Panc1 (cell line): ENCODE measurements at regions of chr17 and their contacts with region 1.

Region 1: DNA sequence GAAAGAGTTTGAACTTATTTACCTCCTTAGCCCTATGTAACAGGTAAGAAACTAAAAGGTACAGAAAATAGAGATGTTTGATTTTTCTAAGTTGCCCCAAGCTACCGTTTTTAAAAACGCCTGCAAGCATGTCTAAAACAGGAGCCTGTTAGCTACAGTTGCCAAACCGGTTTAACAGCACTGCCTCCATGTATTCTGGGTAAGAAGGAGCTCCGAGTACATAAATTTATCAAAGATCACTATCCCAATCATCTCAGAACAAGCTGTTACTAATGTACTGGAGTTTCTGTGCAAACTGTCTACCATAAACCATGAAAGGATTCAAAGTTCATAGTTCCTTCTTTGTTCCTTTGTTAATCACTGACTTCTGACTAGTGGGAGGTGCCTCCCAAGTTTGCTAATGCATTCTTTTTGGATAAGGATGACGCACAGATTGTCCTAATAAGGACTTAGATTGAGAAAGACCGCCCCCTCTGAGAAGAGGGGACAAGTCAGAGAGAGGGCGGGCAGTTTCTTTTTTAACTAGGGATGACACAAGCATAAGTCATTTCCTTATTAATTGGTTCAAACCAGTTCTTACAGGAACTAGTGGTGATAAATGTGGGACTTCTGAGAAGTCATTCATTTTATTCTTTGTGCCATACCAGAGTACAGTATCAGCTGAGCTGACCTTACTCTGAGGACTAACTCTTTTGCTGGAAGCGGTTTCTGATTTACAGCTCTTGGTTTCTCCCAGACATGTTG is 55.3 kb downstream of the TUBD1 start:
- DNase-seq: peak; percentile 99
- ATAC-seq: peak; percentile 83
- H3K4me3 ChIP-seq: peak overlapping the region; percentile 87 to 99
- H3K27ac ChIP-seq: peak overlapping the region; percentile 100
- H3K4me1 ChIP-seq: peaks cover 30% of the 10 kb centered on the region
- H3K27me3 ChIP-seq: no peaks in the 10 kb centered on the region
- CTCF ChIP-seq: no peak

Region 2: DNA sequence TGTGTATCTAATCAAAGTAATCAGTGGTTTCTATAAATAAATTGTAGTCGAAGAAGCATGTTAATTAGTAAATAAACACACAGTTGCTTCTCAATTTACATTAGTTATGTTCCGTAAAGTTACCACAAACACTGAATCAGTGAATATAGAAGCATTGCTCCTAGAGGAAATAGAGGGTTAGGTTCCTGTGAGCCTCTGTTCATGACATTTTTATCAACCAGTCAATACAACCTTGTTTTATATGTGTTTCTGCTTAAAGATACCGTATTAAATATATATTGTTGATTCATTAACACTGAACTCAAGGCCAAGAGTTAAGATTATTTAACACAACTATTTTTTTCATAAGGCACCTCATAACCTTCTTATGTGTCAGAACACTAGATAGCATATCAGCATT is 947.6 kb before region 1 on chr17:
- CTCF ChIA-PET with region 1: no interaction called
- POLR2A ChIA-PET with region 1: no interaction called
- in situ Hi-C with region 1: no loop called
- intact Hi-C with region 1: no loop called
- DNase-seq: no peak
- ATAC-seq: no peak
- H3K4me3 ChIP-seq: no peak overlapping the region
- H3K27ac ChIP-seq: no peak overlapping the region
- H3K4me1 ChIP-seq: no peaks in the 10 kb centered on the region
- H3K27me3 ChIP-seq: no peaks in the 10 kb centered on the region
- CTCF ChIP-seq: no peak

Region 3: DNA sequence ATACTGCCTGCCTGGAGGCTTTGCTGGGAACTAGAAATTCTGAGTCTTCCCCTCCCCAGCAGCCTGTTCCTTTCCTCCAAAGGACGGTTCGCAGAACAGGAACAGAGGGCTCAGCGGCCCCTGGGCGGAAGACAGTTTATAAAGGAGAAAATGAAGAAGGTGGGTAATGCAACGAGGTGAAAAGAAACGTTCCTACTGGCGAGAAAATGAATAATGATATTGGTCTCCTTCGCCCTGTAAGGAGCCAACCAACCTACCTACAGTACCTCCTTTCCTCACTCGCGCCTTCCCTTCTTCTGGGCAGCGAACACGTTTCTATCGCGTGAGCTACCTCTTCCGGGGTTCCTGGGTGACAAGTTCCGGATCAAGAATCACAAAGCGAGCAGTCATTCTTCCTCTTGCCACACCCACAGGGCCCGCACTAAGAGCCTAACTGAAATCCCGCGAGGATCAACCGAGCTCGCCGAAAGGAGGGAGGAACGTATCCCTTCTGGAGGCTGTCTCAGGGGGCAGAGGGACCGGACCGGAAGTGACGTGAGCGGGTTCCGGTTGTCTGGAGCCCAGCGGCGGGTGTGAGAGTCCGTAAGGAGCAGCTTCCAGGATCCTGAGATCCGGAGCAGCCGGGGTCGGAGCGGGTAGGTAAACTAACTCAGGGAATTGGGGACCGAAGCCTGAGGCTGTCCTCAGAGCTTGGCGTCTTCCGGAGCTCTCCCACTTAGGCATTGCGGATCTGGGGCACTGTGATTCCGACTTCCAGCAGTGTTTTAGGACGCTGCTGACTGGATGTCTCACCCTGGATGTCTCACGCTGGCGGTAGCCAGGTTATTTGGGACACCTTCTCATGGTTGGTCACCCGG is 130.1 kb before region 1 on chr17 and contains the starts of genes PTRH2 and VMP1:
- CTCF ChIA-PET with region 1: no interaction called
- POLR2A ChIA-PET with region 1: interaction called, 12 read pairs
- in situ Hi-C with region 1: no loop called
- intact Hi-C with region 1: no loop called
- DNase-seq: peak; percentile 93
- ATAC-seq: peak; percentile 96
- H3K4me3 ChIP-seq: peak within 1 kb of the TSS; percentile 99
- H3K27ac ChIP-seq: peak within 1 kb of the TSS; percentile 100
- H3K4me1 ChIP-seq: peaks cover 24% of the 10 kb centered on the region
- H3K27me3 ChIP-seq: no peaks in the 10 kb centered on the region
- CTCF ChIP-seq: no peak
- total RNA-seq, gene PTRH2: 40.2 TPM
- total RNA-seq, gene VMP1: 281 TPM

Region 4: GRCh38 chr17:59786536-59787319 is 50.8 kb before region 1 on chr17:
- CTCF ChIA-PET with region 1: no interaction called
- POLR2A ChIA-PET with region 1: interaction called, 34 read pairs
- in situ Hi-C with region 1: no loop called
- intact Hi-C with region 1: loop called (anchors 2 kb)
- DNase-seq: peak; percentile 94
- ATAC-seq: peak; percentile 89
- H3K4me3 ChIP-seq: no peak overlapping the region
- H3K27ac ChIP-seq: peak overlapping the region; percentile 100
- H3K4me1 ChIP-seq: peaks cover 59% of the 10 kb centered on the region
- H3K27me3 ChIP-seq: no peaks in the 10 kb centered on the region
- CTCF ChIP-seq: no peak

Region 5: DNA sequence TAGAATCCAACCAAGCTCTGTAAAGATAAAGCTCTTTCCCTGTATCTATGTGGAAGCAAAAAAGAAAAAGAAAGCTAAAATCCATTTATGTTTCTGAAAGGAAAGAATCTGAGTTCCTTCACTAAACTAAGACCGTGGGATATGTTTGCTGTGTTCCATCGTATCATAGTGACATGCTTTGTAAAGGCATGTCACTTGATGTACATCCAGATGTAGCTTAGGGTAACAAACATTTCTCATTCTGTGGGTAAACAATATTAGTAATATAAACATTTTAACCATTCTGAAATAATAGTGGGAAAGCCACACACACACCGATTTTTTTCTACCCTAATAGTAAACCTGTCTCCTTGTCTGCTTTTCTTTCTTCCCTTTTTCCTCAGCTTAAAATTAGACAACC is 22.8 kb before region 1 on chr17:
- CTCF ChIA-PET with region 1: no interaction called
- POLR2A ChIA-PET with region 1: interaction called, 10 read pairs
- in situ Hi-C with region 1: no loop called
- intact Hi-C with region 1: no loop called
- DNase-seq: no peak
- ATAC-seq: 0 out of 2 replicates have a peak, but pooled peaks have one; percentile 16
- H3K4me3 ChIP-seq: no peak overlapping the region
- H3K27ac ChIP-seq: peak overlapping the region; percentile 92
- H3K4me1 ChIP-seq: peaks cover 14% of the 10 kb centered on the region
- H3K27me3 ChIP-seq: no peaks in the 10 kb centered on the region
- CTCF ChIP-seq: no peak

Region 6: GRCh38 chr17:59859444-59860025 is 22.1 kb after region 1 on chr17:
- CTCF ChIA-PET with region 1: interaction called, 7 read pairs
- POLR2A ChIA-PET with region 1: interaction called, 18 read pairs
- in situ Hi-C with region 1: no loop called
- intact Hi-C with region 1: no loop called
- DNase-seq: no peak
- ATAC-seq: peak; percentile 56
- H3K4me3 ChIP-seq: no peak overlapping the region
- H3K27ac ChIP-seq: peak overlapping the region; percentile 100
- H3K4me1 ChIP-seq: peaks cover 36% of the 10 kb centered on the region
- H3K27me3 ChIP-seq: no peaks in the 10 kb centered on the region
- CTCF ChIP-seq: no peak